Activated T-helper 2 cell treated with anti-CD3 and anti-CD28 coated beads, Interferon-gamma antibody, Interleukin-2, Interleukin-4, amounts not matched to agents 10 μg/mL and 5 μg/mL and 100 μg/mL, durations not matched to agents 14 hours and 24 hours and 36 hours (primary cell): ENCODE measurements at regions of chr4 and their contacts with region 1.

Region 1: DNA sequence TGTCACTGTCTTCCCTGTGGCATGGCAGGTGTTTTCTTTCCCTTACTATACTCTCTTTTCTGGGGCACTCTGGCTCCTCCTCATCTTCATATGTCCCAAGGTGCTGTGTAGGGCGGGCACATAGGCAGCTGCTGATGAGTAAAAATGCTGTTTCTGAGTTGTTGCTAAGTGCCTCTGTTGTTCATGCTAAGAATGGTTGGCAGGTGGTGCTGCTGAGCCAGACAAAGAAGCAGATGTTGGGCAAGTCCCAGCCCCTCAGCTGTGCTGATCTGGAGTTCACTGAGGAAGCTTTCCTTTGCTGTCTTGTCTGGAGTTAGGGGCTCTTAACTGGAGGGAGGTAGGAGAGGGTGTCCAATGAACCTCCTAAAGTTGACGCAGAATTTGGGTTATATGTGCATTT is 40.6 kb downstream of the HADH start:
- DNase-seq: peak; percentile 66
- H3K4me3 Mint-ChIP-seq: no peak overlapping the region
- H3K27ac Mint-ChIP-seq: peak overlapping the region; percentile 70
- H3K4me1 Mint-ChIP-seq: peaks cover 41% of the 10 kb centered on the region
- H3K27me3 Mint-ChIP-seq: no peaks in the 10 kb centered on the region

Region 2: DNA sequence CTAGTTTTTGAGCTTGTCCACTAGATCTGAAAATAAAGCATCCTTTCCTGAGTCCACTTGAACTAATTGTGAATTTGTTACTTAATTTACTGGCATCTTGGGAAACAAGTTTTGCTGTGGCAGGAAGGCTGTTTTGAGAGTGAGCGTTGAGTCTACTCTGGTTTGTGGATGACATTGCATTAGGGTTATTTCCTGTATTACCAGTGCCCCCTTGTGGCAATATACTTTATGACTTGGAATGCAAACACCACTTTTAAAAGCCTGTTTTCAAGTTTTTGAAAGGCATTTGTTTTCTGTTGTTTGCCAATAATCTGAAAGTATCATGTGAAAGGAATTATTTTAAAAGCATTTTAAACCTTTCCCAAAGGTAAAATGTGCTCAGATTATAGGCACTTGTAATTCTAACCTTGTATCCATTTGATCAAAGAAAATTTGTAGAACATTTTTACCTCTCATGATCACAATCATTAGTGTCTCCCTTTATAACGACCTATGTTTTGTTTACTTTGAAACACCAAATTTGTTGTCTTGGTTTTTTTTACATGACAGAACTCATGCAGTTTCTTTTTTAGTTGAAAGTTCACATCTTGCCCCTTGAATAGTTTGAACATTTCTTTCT is 116.9 kb before region 1 on chr4:
- intact Hi-C with region 1: no loop called
- DNase-seq: no peak
- H3K4me3 Mint-ChIP-seq: no peak overlapping the region
- H3K27ac Mint-ChIP-seq: no peak overlapping the region
- H3K4me1 Mint-ChIP-seq: peaks cover 4% of the 10 kb centered on the region
- H3K27me3 Mint-ChIP-seq: peaks cover 9% of the 10 kb centered on the region

Region 3: GRCh38 chr4:108053251-108053711 is 22.9 kb after region 1 on chr4:
- intact Hi-C with region 1: no loop called
- DNase-seq: no peak
- H3K4me3 Mint-ChIP-seq: no peak overlapping the region
- H3K27ac Mint-ChIP-seq: peak overlapping the region; percentile 70
- H3K4me1 Mint-ChIP-seq: peaks cover 45% of the 10 kb centered on the region
- H3K27me3 Mint-ChIP-seq: no peaks in the 10 kb centered on the region

Region 4: DNA sequence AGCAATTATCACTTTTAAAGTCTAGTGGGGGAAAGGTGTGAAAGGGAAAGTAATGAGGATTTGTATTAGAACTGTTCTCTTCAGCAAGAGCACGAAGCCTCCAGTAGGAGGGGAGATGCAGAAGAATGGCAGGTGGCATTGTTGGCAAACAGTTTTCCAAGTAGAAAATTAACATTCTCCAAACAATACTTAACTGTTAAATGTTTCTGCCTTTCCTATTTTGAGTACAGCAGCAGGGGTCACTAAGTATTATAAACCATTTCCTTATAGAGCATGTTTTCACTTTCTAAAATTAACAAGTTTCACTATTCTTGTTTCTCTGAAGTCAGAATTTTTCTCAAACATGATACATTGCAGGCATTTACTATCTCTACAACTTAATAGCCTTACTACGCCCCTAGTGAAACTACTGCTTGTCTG is 79.7 kb after region 1 on chr4:
- intact Hi-C with region 1: loop called (anchors 2 kb)
- DNase-seq: no peak
- H3K4me3 Mint-ChIP-seq: peak overlapping the region; percentile 38
- H3K27ac Mint-ChIP-seq: peak overlapping the region; percentile 57
- H3K4me1 Mint-ChIP-seq: peaks cover 80% of the 10 kb centered on the region
- H3K27me3 Mint-ChIP-seq: no peaks in the 10 kb centered on the region

Region 5: DNA sequence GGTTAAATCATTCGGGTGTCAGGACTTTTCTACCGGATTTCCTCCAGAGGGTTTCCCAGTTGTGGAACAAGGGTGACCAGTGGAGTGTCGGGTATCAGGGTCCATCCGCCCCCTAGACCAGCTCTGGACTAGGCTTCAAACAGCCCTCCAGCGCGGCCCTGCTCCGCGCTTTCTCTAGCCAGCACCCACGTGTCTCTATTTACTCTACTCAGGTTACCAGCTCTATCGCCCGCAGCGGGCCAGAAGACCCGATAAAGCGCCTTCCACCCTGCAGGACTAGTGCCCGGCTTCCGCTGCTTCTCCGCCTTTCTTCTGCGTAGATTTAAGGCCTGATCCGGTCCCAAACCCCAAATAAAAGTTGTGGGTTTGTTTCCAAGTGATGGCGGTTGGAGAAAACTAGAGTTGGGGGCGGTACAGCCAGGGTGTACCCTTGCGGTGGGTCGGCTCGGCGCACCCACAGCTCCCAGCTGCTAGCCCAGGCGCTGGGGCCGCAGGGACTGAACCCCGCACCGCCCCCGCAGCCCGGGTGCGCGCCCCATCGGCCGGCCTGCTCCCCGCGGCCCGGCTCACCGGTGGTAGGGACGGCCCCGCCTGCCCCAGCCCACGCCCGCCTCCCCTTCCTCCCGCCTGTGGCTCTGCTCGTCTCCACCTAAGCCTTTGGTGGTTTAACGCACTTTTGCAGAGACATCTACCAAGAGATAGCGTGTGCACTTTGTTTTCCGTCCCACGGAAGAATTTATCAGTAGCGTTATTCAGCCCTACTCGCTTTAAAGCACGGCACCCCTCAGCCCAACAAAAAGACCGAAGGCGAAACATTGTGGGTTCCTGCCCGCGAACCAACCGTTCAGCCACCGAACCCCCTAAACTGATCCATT is 136.3 kb after region 1 on chr4:
- intact Hi-C with region 1: loop called (anchors 2 kb)
- DNase-seq: peak; percentile 66
- H3K4me3 Mint-ChIP-seq: peak overlapping the region; percentile 97
- H3K27ac Mint-ChIP-seq: peak overlapping the region; percentile 94
- H3K4me1 Mint-ChIP-seq: peaks cover 55% of the 10 kb centered on the region
- H3K27me3 Mint-ChIP-seq: peaks cover 22% of the 10 kb centered on the region

Region 6: GRCh38 chr4:108433832-108434231 is 403.5 kb after region 1 on chr4:
- intact Hi-C with region 1: loop called (anchors 5 kb)
- DNase-seq: peak; percentile 47
- H3K4me3 Mint-ChIP-seq: no peak overlapping the region
- H3K27ac Mint-ChIP-seq: peak overlapping the region; percentile 77
- H3K4me1 Mint-ChIP-seq: peaks cover 32% of the 10 kb centered on the region
- H3K27me3 Mint-ChIP-seq: peaks cover 5% of the 10 kb centered on the region

Region 7: DNA sequence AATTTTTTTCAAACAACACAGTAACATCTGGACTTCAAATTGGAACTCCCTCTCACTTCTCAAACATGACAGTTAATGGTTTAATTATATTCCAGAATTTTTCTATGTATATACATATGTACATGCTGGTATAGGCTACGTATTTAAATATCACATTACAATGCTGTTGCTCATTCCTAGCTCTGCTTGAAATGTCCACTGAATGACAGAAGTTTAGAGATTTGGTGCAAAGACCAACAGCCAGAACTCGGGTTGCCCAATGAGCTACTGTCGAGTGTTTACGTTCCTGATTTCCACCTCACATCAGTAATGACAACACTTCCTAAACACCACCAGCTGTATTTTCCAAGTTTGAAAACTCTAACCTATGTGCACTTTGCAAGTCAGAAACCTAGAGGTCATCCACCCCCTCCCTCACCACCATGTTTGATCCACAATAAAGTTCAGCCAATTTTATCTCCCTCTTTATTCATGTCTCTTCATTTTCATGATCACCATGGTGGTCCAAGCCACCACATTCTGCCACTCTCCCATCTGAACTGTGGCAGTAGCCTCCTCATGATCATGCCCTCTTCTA is 540.7 kb after region 1 on chr4:
- intact Hi-C with region 1: loop called (anchors 1 kb)
- DNase-seq: no peak
- H3K4me3 Mint-ChIP-seq: no peak overlapping the region
- H3K27ac Mint-ChIP-seq: no peak overlapping the region
- H3K4me1 Mint-ChIP-seq: peaks cover 5% of the 10 kb centered on the region
- H3K27me3 Mint-ChIP-seq: no peaks in the 10 kb centered on the region